ENCODE measurements at regions of chr2 and their contacts with region 1.

Region 1: DNA sequence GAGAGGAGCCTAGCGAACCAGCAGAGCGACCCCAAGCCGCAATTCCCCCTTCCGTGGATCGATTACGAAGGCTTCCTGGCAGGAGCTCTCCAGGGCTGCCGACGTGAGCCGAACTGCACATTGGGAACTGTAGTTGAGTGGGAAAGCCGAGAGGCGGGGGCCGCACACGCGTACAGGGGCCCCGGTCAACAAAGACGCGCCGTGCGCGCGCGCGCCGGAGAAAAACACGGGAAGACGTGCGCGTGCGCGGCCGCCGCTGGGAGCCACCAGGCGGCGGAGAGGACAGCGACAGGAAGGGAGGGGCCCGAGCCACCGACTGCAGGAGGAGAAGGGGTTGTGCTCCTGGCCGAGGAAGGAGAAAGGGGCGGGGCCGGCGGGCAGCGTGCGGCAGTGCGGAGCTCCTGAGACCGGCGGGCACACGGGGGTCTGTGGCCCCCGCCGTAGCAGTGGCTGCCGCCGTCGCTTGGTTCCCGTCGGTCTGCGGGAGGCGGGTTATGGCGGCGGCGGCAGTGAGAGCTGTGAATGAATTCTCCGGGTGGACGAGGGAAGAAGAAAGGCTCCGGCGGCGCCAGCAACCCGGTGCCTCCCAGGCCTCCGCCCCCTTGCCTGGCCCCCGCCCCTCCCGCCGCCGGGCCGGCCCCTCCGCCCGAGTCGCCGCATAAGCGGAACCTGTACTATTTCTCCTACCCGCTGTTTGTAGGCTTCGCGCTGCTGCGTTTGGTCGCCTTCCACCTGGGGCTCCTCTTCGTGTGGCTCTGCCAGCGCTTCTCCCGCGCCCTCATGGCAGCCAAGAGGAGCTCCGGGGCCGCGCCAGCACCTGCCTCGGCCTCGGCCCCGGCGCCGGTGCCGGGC is at the start of gene SPAST:
- DNase-seq: peak; percentile 93 to 99 (median 97)

Region 2: GRCh38 chr2:32010670-32011484 is 52.7 kb before region 1 on chr2 and contains the start of gene MEMO1:
- intact Hi-C with region 1: loop called (anchors 2 kb)
- DNase-seq: peak; percentile 80 to 97 (median 94)

Region 3: GRCh38 chr2:32168513-32168912 is 105.0 kb after region 1 on chr2:
- intact Hi-C with region 1: loop called (anchors 5 kb)
- DNase-seq: no peak

Region 4: GRCh38 chr2:32342801-32343200 is 279.3 kb after region 1 on chr2:
- intact Hi-C with region 1: no loop called
- DNase-seq: peak in 1 of 42 donors; percentile 18